Natural killer cell (primary cell): ENCODE measurements at regions of chr2 and their contacts with region 1.

Region 1: GRCh38 chr2:136117909-136118818 is at the start of gene CXCR4:
- DNase-seq: peak; percentile 88 to 93
- ATAC-seq: peak; percentile 26 to 49 (median 31)
- H3K4me3 ChIP-seq: peak within 1 kb of the TSS; percentile 98
- H3K4me3 Mint-ChIP-seq: peak within 1 kb of the TSS; percentile 90
- H3K27ac ChIP-seq: peak within 1 kb of the TSS; percentile 98
- H3K27ac Mint-ChIP-seq: peak within 1 kb of the TSS; percentile 85 to 90
- H3K4me1 ChIP-seq: peaks cover 32% of the 10 kb centered on the region
- H3K4me1 Mint-ChIP-seq: peaks cover 31 to 55% of the 10 kb centered on the region in 2 donors
- H3K27me3 ChIP-seq: no peaks in the 10 kb centered on the region
- H3K27me3 Mint-ChIP-seq: no peaks in the 10 kb centered on the region
- CTCF ChIP-seq: no peak
- total RNA-seq, gene CXCR4: 582 to 848 (median 741) TPM

Region 2: DNA sequence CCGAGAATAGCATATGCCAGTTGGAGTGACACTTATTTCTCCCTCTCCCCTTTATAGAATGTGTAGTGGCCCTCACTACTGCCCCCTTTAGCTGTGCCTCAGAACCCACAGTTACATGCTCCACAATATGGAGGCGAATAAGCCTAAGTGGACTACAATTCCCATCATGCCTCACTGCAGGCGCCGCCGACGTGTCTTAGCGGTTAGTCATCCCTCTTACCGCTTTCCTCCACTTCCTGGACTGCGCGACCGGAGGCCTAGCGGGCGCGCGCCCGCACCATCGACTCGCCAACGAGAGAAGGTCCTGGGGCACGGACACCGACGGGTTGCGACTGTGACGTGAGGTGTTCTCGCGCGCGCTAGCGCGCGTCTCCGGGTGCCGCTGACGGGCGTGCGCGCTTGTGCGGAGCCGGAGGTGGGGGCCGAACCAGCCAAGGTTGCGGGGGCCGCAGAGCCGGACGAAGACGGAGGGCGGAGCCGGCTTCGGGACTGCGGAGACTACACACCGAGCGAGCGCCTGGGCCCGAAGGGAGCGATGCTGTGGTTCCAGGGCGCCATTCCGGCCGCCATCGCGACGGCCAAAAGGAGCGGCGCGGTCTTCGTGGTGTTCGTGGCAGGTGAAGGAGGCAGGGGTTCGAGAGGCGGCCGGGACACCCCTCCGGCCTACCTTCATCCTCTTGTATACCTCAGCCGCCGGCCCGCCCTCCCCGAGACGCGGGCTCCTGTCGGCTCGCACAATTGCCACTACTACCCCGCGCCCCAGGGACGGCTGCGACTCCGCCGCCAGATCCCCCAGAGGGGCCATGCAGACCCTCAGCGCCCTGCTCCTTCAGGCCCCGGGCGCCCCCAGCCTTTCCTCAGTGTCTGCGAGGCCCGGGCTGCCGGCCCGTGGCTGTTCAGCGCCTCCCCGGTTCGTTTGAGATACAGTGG is 376.5 kb before region 1 on chr2 and contains the start of gene UBXN4:
- intact Hi-C with region 1: loop called (anchors 5 kb)
- DNase-seq: peak; percentile 84 to 98
- ATAC-seq: peak; percentile 86 to 97 (median 90)
- H3K4me3 ChIP-seq: peak within 1 kb of the TSS; percentile 100
- H3K4me3 Mint-ChIP-seq: peak within 1 kb of the TSS; percentile 95
- H3K27ac ChIP-seq: peak within 1 kb of the TSS; percentile 100
- H3K27ac Mint-ChIP-seq: peak within 1 kb of the TSS; percentile 95 to 96
- H3K4me1 ChIP-seq: no peaks in the 10 kb centered on the region
- H3K4me1 Mint-ChIP-seq: peaks cover 34 to 41% of the 10 kb centered on the region in 2 donors
- H3K27me3 ChIP-seq: no peaks in the 10 kb centered on the region
- H3K27me3 Mint-ChIP-seq: no peaks in the 10 kb centered on the region
- CTCF ChIP-seq: peak; percentile 22
- total RNA-seq, gene UBXN4: 129 to 153 (median 150) TPM

Region 3: DNA sequence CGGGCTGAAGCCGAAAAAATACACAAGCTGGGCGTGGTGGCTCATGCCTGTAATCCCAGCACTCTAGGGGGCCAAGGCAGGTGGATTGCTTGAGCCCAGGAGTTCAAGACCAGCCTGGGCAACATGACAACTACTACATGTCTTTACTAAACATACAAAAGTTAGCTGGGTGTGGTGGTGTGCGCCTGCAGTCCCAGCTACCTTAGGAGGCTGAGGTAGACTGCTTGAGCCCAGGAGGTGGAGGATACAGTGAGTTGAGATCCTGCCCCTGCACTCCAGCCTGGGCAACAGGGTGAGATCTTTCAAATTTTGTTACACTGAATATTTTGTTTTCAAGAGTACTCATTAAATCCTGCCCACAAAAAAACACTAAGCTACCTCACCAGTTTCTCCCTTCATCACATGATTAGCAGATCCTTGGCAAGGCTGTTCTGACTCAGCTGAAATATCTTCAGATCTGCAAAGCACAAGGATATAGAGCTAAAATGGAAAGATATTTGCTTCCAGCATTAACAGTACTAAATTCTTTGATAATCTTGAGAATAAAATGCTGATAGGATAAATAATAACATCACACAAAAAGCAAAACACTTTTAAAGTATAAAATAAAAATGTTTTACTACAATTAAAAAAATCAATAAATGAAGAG is 213.7 kb before region 1 on chr2:
- intact Hi-C with region 1: no loop called
- DNase-seq: no peak
- ATAC-seq: no peak
- H3K4me3 ChIP-seq: no peak overlapping the region
- H3K4me3 Mint-ChIP-seq: no peak overlapping the region
- H3K27ac ChIP-seq: no peak overlapping the region
- H3K27ac Mint-ChIP-seq: no peak overlapping the region
- H3K4me1 ChIP-seq: no peaks in the 10 kb centered on the region
- H3K4me1 Mint-ChIP-seq: no peaks in the 10 kb centered on the region
- H3K27me3 ChIP-seq: no peaks in the 10 kb centered on the region
- H3K27me3 Mint-ChIP-seq: no peaks in the 10 kb centered on the region
- CTCF ChIP-seq: no peak

Region 4: GRCh38 chr2:136008205-136008865 is 109.8 kb before region 1 on chr2:
- intact Hi-C with region 1: loop called (anchors 1 kb)
- DNase-seq: peak; percentile 70 to 88
- ATAC-seq: peak; percentile 88 to 95 (median 93)
- H3K4me3 ChIP-seq: no peak overlapping the region
- H3K4me3 Mint-ChIP-seq: peak overlapping the region; percentile 57
- H3K27ac ChIP-seq: peak overlapping the region; percentile 59
- H3K27ac Mint-ChIP-seq: peak overlapping the region; percentile 88 to 91
- H3K4me1 ChIP-seq: peaks cover 28% of the 10 kb centered on the region
- H3K4me1 Mint-ChIP-seq: peaks cover 20 to 28% of the 10 kb centered on the region in 2 donors
- H3K27me3 ChIP-seq: no peaks in the 10 kb centered on the region
- H3K27me3 Mint-ChIP-seq: peaks cover 0 to 6% of the 10 kb centered on the region in 2 donors
- CTCF ChIP-seq: no peak

Region 5: DNA sequence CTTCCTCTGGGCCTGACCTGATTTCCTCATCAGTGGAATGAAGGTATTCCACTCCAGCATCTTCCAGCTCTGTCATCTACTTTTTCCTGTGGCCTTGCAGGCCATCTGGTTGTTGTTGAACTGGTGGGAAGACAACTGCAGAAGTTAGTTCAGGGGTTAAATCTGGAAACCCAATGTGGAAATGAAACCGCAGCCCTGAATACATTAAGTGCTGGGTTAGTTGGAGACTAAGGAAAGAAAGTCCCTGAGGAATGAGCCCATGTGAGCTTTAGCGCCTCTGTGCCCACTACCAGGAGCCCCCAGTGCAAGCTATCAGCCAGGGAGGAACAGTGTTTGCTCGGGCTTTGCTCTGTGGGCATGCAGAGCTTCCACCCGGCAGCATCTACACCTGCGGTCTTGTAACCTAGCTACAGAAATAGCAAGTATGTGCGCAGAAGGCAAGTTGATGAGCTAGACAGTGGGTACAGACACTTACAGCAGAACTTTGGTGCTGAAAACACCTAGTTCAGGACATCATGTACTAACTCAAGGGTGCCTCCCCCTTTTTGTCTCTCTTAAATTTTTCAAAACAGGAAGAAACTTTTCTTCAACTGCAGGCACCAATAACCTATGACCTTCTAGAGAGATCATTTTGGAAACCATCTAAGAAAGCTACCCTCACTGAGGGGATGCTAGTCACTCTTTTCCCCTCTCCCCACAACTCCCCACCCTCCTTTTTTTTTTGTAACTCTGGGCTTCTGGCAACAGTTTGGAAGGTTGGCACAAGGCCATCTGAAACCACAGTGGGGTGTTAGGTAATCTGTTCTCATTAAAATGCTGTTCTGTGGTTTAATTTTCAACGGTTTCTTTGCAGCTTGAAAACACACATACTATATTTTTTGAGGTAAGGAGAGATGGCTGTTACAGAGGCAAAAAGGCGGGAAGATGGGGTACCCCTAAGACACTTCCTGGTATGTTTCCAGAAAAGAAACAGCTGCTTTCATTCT is 18.1 kb after region 1 on chr2:
- intact Hi-C with region 1: loop called (anchors 1 kb)
- DNase-seq: peak; percentile 64 to 96
- ATAC-seq: peak; percentile 61 to 87 (median 81)
- H3K4me3 ChIP-seq: no peak overlapping the region
- H3K4me3 Mint-ChIP-seq: peak overlapping the region; percentile 62
- H3K27ac ChIP-seq: peak overlapping the region; percentile 89
- H3K27ac Mint-ChIP-seq: peak overlapping the region; percentile 93 to 99
- H3K4me1 ChIP-seq: peaks cover 79% of the 10 kb centered on the region
- H3K4me1 Mint-ChIP-seq: peaks cover 71 to 74% of the 10 kb centered on the region in 2 donors
- H3K27me3 ChIP-seq: no peaks in the 10 kb centered on the region
- H3K27me3 Mint-ChIP-seq: no peaks in the 10 kb centered on the region
- CTCF ChIP-seq: no peak

Region 6: DNA sequence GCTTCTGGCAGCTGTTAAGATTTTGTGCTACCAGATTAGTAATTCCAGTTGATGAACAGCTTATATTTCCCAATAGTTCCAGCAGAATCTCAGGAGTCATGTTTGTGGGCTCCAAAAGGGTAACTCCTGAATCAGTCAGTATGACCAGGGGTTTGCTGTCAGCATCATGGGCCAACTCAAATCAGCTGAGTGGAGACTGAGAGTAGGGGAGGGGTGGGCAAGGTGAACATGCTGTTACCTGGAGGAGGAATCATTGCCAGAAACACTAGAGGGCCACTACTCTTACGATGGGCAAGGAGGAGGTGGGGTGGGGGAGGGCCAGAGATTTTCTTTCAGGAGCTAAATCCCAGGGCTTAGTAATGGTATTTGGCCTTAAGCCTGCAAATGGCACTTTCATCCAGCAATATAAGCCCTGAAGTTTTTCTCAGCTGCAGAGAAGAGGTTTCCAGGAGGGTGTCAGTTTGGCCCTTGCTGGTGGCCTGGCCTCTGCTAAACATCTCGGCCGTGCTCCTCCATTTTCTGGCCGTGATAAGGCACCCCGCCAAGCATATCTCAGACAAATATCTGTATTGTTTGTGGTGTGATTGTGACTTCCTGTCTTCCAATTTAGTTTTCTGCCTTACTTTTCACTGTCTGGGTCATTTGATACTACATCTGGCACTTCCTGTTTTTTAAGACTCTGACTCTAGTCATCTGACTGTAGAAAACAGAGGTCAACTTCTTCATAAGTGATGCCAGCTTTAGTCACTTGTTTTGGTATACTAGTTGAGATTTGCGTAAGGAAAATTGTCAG is 120.3 kb after region 1 on chr2:
- intact Hi-C with region 1: loop called (anchors 2 kb)
- DNase-seq: peak; percentile 33 to 81
- ATAC-seq: peak; percentile 61 to 85 (median 77)
- H3K4me3 ChIP-seq: no peak overlapping the region
- H3K4me3 Mint-ChIP-seq: peak overlapping the region; percentile 11
- H3K27ac ChIP-seq: peak overlapping the region; percentile 94
- H3K27ac Mint-ChIP-seq: peak overlapping the region; percentile 93 to 97
- H3K4me1 ChIP-seq: peaks cover 43% of the 10 kb centered on the region
- H3K4me1 Mint-ChIP-seq: peaks cover 54 to 63% of the 10 kb centered on the region in 2 donors
- H3K27me3 ChIP-seq: no peaks in the 10 kb centered on the region
- H3K27me3 Mint-ChIP-seq: peaks cover 0 to 3% of the 10 kb centered on the region in 2 donors
- CTCF ChIP-seq: no peak

Region 7: GRCh38 chr2:136327162-136327852 is 209.1 kb after region 1 on chr2:
- intact Hi-C with region 1: loop called (anchors 1 kb)
- DNase-seq: peak; percentile 64 to 92
- ATAC-seq: peak; percentile 90 to 92 (median 92)
- H3K4me3 ChIP-seq: peak overlapping the region; percentile 19
- H3K4me3 Mint-ChIP-seq: peak overlapping the region; percentile 73
- H3K27ac ChIP-seq: peak overlapping the region; percentile 91
- H3K27ac Mint-ChIP-seq: peak overlapping the region; percentile 86 to 91
- H3K4me1 ChIP-seq: peaks cover 18% of the 10 kb centered on the region
- H3K4me1 Mint-ChIP-seq: peaks cover 16 to 38% of the 10 kb centered on the region in 2 donors
- H3K27me3 ChIP-seq: no peaks in the 10 kb centered on the region
- H3K27me3 Mint-ChIP-seq: no peaks in the 10 kb centered on the region
- CTCF ChIP-seq: no peak